ENCODE measurements at regions of chr6 and their contacts with region 1.

Region 1: GRCh38 chr6:33118525-33119123 is 42.8 kb downstream of the HLA-DPB1 start:
- DNase-seq: peak in 1 of 2 experiments; percentile 54
- H3K4me3 ChIP-seq: no peak overlapping the region
- H3K4me3 Mint-ChIP-seq: no peak overlapping the region
- H3K27ac Mint-ChIP-seq: no peak overlapping the region
- H3K4me1 ChIP-seq: peaks cover 6% of the 10 kb centered on the region; the same call in 1 of the 2 replicates
- H3K4me1 Mint-ChIP-seq: peaks cover 12% of the 10 kb centered on the region
- H3K27me3 ChIP-seq: peaks cover 1% of the 10 kb centered on the region
- H3K27me3 Mint-ChIP-seq: peaks cover 19% of the 10 kb centered on the region
- CTCF ChIP-seq: peak; percentile 60 to 73

Region 2: DNA sequence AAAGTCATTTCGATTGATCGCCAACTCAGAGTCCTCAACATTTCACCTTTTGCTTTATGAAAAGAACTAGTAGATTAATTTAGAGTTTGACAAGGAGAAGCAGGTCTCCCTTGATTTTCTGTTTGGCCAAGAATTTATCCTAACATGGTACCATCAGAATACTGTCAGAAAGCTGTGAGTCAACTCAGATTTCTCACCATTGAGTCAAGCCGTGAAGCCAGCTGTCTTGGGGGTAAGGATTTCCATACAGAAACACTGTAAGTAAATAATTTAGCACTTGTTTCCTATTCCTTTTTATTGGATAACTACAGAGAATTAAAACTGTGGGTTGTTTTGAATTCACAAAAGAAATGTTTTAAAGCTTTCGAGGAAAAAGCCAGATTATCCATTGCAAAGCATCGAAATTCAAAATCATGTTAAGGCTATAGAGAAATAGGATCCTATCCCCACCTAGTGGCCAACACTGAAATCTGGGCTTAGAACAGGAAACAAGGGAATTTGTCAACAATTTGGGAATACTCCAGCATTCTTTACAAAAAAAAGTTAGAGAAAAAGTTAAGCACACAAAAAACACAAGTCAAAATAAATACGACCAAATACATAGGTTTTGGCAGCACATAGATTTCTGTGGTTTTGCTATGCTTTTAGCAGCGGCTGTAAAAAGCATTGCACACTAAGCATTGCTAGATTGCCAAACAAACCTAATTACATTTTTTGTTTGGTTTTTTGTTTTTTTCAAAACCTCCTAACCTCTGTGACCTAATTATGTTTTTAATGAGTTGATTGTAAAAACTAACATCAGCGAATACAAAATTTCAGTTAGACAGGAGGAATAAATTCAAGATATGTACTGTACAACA is 29.4 kb after region 1 on chr6:
- CTCF ChIA-PET with region 1: no interaction called
- POLR2A ChIA-PET with region 1: no interaction called
- intact Hi-C with region 1: loop called (anchors 1 kb)
- DNase-seq: peak in 1 of 2 experiments; percentile 43
- H3K4me3 ChIP-seq: no peak overlapping the region
- H3K4me3 Mint-ChIP-seq: no peak overlapping the region
- H3K27ac Mint-ChIP-seq: no peak overlapping the region
- H3K4me1 ChIP-seq: no peaks in the 10 kb centered on the region
- H3K4me1 Mint-ChIP-seq: no peaks in the 10 kb centered on the region
- H3K27me3 ChIP-seq: no peaks in the 10 kb centered on the region
- H3K27me3 Mint-ChIP-seq: peaks cover 3% of the 10 kb centered on the region
- CTCF ChIP-seq: peak; percentile 75 to 76

Measured in Caco-2 (cell line).